Activated naive CD4-positive, alpha-beta T cell treated with anti-CD3 and anti-CD28 coated beads for 36 hours (primary cell): ENCODE measurements at regions of chr7 and their contacts with region 1.

Region 1: GRCh38 chr7:17234398-17235031 is 63.9 kb upstream of the AHR start:
- DNase-seq: peak; percentile 84
- H3K4me3 Mint-ChIP-seq: peak overlapping the region; percentile 69
- H3K27ac Mint-ChIP-seq: peak overlapping the region; percentile 89
- H3K4me1 Mint-ChIP-seq: peaks cover 46% of the 10 kb centered on the region
- H3K27me3 Mint-ChIP-seq: no peaks in the 10 kb centered on the region

Region 2: DNA sequence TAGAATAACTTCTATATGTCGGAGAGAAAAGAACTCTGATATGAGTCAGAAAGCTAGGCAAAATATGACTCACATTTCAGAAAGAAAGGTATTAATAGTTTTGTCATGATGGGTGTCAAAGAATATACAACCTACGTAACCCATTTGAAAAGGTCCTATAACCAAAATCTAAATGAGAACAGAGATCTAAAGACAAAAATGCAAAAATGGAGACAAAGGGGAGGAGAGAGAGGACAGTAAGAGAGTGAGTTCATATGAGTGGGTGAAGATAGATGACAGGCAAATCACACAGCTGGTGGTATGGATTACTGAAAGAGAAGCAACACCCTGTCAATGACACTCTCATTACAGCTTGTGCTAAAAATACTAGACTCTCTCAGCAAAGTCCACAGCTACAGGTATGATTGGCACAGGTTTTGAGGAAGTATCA is 614.5 kb before region 1 on chr7:
- CTCF ChIA-PET with region 1: no interaction called
- intact Hi-C with region 1: loop called (anchors 1 kb)
- DNase-seq: peak; percentile 33
- H3K4me3 Mint-ChIP-seq: peak overlapping the region; percentile 23
- H3K27ac Mint-ChIP-seq: peak overlapping the region; percentile 81
- H3K4me1 Mint-ChIP-seq: peaks cover 13% of the 10 kb centered on the region
- H3K27me3 Mint-ChIP-seq: no peaks in the 10 kb centered on the region

Region 3: DNA sequence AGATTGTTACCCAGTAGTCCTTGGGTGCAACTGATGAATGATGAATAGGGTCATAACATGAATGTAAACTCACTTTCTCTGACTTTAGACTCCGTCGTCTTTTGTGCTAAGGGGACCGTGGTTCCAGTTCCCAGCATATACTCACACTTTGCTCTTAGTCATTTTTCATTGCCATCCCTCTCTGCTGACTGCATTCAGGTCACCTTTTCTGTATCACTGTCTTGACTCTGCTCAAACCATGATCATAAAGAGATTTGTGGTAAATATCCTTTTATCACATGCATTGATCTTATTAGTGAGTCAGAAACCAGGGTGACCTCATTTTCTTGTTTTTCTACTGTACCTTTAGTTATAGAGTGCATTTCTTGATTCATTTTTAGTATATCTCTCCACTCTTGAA is 211.6 kb before region 1 on chr7:
- CTCF ChIA-PET with region 1: no interaction called
- intact Hi-C with region 1: loop called (anchors 1 kb)
- DNase-seq: peak; percentile 49
- H3K4me3 Mint-ChIP-seq: no peak overlapping the region
- H3K27ac Mint-ChIP-seq: no peak overlapping the region
- H3K4me1 Mint-ChIP-seq: peaks cover 10% of the 10 kb centered on the region
- H3K27me3 Mint-ChIP-seq: peaks cover 8% of the 10 kb centered on the region

Region 4: GRCh38 chr7:17166824-17167379 is 67.6 kb before region 1 on chr7:
- CTCF ChIA-PET with region 1: no interaction called
- intact Hi-C with region 1: loop called (anchors 1 kb)
- DNase-seq: peak; percentile 48
- H3K4me3 Mint-ChIP-seq: no peak overlapping the region
- H3K27ac Mint-ChIP-seq: no peak overlapping the region
- H3K4me1 Mint-ChIP-seq: peaks cover 23% of the 10 kb centered on the region
- H3K27me3 Mint-ChIP-seq: no peaks in the 10 kb centered on the region

Region 5: DNA sequence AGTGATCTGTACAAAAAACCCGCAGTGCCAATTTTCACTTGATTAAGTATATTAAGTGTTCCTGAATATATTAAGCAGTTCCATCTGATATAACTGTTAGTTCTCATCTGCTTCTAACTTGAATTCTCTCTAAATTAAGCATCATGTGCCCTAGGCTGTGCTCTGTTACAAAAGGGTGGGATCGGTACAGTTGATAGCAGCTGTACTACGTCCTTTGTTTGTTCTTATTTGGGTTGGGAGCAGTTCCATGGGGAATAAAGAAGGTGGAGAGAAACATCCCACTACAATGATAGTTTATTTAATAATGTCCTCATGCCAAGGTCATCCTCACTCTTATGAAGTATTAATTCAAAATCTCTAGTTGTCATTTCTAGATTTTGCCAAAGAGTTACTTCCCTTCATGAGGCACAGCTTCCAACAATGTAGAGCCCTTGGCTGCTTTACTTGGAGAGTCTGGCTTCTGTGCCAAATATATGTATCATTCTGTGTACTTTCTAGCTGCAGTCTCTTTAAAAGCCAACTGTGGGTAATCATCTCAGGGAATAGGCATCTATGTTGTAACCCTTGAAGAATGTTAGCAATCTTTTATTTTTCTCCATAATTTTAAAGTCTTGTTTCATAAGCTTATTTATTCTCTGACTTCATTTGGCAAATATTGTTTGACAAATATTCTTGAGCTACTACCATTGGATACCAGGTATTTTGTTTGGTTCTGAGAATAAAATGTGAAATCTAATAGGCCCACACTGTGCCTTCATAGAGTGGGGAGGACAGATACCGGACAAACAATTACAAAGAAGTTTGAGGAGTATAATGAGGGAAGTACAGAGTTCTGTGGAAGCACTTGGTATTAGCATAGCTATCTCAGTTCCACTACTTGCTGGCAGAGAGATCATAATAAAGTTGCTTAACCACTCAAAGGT is 41.5 kb after region 1 on chr7:
- CTCF ChIA-PET with region 1: no interaction called
- intact Hi-C with region 1: loop called (anchors 1 kb)
- DNase-seq: no peak
- H3K4me3 Mint-ChIP-seq: no peak overlapping the region
- H3K27ac Mint-ChIP-seq: peak overlapping the region; percentile 25
- H3K4me1 Mint-ChIP-seq: peaks cover 19% of the 10 kb centered on the region
- H3K27me3 Mint-ChIP-seq: no peaks in the 10 kb centered on the region

Region 6: DNA sequence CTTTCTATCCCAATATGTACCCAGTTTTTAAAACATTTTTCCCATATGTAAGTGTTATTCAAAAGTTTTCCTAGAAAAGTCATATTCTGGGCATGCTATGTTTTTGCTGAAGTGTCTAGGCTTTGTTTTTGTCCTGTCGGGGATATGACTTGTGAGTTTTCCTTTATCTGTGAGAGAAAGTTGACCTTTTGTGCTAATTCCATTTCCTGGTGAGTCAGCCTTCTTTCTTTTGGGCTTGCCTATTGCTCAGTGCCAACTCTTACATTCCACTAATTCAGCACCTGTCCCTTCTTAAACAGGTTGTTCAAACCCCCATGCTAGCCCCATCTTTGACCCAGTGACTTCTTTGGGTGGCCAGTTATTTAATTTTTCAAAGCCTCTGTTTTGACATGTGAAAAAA is 210.2 kb after region 1 on chr7:
- CTCF ChIA-PET with region 1: no interaction called
- intact Hi-C with region 1: loop called (anchors 1 kb)
- DNase-seq: no peak
- H3K4me3 Mint-ChIP-seq: no peak overlapping the region
- H3K27ac Mint-ChIP-seq: no peak overlapping the region
- H3K4me1 Mint-ChIP-seq: peaks cover 11% of the 10 kb centered on the region
- H3K27me3 Mint-ChIP-seq: peaks cover 5% of the 10 kb centered on the region